AG04449 (cell line): ENCODE measurements at regions of chr7 and their contacts with region 1.

Region 1: DNA sequence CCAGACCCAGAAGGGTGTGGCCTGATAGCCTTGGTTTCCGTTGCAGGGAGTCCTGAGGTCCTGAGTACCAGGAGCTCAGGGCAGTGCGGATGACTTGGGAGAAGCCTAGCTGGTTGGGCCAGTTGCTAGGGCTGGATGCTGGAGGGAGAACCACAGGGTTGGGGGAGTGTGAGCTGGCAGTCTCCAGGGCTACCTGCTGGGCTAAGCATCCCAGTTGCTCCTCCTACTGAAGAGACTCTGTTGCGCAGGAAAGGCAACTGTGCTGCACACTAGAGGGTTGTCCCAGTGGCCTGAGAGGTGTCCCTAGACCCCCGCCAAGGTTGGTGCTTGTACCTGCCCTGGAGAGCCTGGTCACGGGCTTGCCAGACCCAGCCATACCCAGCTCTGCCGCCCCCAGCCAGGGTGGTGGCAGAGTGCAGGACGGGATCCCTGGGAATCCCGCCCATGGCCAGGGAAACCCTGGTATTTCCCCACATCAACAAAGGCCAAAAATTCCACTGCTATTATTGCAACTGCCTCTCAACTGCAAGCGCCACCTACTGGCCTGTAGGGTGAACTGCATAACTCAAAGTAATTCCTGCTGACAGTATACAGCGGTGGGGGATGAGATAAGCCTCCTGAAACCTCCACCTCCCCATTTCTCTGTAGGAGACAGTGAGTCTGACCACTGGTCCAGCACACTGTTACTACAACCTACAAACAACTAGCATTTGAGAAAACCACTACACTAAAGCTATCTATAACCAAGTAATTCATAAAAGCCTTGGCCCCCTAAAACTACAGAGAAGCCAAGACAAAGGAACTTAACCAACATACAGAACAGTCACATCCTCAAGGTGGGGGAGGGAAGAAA is 67.6 kb upstream of the DDC start:
- DNase-seq: no peak
- H3K4me3 ChIP-seq: no peak overlapping the region
- CTCF ChIP-seq: peak; percentile 72

Region 2: DNA sequence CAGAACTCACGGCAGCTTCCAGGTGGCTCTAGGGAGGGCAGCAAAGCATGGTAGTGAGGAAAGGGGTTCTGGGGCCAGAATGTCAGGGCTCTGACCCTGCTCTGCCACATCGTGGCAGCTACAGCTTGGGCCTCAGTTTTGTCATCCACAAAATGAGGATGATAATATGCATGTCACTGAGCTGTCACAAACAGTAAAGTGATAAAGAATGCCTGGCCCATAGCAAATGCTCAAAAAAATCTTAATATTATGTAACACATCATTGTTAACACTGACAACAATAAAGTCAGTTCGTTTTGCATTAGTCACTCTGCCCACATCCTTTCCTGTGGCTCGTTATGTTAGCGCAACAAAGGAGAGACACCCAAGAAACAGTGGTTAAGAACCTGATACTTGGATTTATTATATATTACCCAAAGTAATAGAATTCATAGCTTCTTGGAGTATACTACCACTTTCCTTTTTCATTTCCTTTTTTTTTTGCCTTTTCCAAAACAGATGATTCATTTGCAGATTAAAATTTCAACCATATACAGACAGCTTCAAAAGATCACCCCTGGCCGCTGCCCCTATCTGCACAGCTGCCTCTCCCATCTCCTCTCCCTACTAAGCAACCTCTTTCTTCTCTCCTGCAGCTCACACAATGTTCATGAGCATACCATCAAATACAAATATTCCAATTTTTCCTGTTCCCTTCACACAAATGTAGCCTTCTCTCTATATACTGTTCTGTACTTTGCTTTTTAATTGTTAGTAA is 22.1 kb before region 1 on chr7:
- CTCF ChIA-PET with region 1: interaction called, 21 read pairs
- POLR2A ChIA-PET with region 1: no interaction called
- DNase-seq: no peak
- H3K4me3 ChIP-seq: no peak overlapping the region
- CTCF ChIP-seq: no peak

Region 3: DNA sequence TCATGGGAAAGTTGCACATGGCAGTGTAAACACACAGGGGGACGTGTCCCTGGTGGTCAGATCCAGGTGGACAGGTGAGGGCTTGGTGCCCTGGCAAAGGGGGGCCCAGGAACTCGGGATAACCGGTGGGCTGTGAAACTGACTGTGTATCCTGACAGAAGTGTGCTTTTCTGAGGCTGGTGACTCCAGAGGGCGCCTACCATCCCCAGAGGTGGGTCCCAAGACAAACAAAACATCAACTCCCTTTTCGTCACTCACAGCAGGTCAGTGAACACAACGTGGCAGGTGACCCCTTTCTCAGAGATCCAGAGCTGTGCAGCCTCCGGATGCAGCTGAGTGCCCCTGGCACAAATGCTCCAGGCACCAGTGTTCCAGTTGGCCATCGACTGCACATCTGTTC is 11.6 kb before region 1 on chr7:
- CTCF ChIA-PET with region 1: interaction called, 21 read pairs
- POLR2A ChIA-PET with region 1: no interaction called
- DNase-seq: no peak
- H3K4me3 ChIP-seq: no peak overlapping the region
- CTCF ChIP-seq: no peak

Region 4: GRCh38 chr7:50653126-50653864 is 20.5 kb after region 1 on chr7:
- CTCF ChIA-PET with region 1: interaction called, 34 read pairs
- POLR2A ChIA-PET with region 1: no interaction called
- DNase-seq: no peak
- H3K4me3 ChIP-seq: no peak overlapping the region
- CTCF ChIP-seq: no peak